CD4-positive, alpha-beta memory T cell (primary cell): ENCODE measurements at regions of chr15 and their contacts with region 1.

Region 1: GRCh38 chr15:85485956-85486567 is 105.7 kb downstream of the AKAP13 start:
- DNase-seq: peak; percentile 65 to 73 (median 70)
- H3K4me3 ChIP-seq: no peak overlapping the region
- H3K4me3 Mint-ChIP-seq: peak overlapping the region in 1 of 8 donors; percentile 12
- H3K27ac ChIP-seq: no peak overlapping the region
- H3K27ac Mint-ChIP-seq: peak overlapping the region in 4 of 7 donors; percentile 1 to 63 (median 22)
- H3K4me1 ChIP-seq: peaks cover 41% of the 10 kb centered on the region
- H3K4me1 Mint-ChIP-seq: peaks cover 49 to 79% (median 65%) of the 10 kb centered on the region in 4 donors
- H3K27me3 ChIP-seq: no peaks in the 10 kb centered on the region
- H3K27me3 Mint-ChIP-seq: no peaks in the 10 kb centered on the region

Region 2: DNA sequence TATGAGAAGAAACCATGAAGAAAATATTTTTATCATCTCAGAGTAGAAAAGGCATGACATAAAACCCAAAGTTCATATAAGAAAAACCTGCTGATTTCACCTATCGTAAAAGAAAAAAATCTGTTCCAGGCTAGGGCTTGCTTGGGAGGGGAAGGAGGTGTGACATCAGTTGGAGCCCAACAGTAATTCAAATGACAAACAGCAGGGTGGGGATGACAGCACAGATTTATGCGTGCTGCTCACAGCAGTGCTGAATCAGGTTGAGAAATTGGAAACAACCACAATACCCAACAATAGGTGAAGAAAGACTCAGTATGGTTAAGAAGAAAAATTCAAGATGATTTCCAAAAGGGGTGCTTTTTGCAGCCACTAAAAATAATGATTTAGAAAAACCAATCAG is 332.0 kb before region 1 on chr15:
- CTCF ChIA-PET with region 1: no interaction called
- POLR2A ChIA-PET with region 1: no interaction called
- intact Hi-C with region 1: no loop called
- DNase-seq: no peak
- H3K4me3 ChIP-seq: no peak overlapping the region
- H3K4me3 Mint-ChIP-seq: no peak overlapping the region
- H3K27ac ChIP-seq: no peak overlapping the region
- H3K27ac Mint-ChIP-seq: no peak overlapping the region
- H3K4me1 ChIP-seq: peaks cover 7% of the 10 kb centered on the region
- H3K4me1 Mint-ChIP-seq: peaks cover 6 to 16% (median 7%) of the 10 kb centered on the region in 4 donors
- H3K27me3 ChIP-seq: no peaks in the 10 kb centered on the region
- H3K27me3 Mint-ChIP-seq: peaks cover 3 to 8% of the 10 kb centered on the region in 2 donors

Region 3: DNA sequence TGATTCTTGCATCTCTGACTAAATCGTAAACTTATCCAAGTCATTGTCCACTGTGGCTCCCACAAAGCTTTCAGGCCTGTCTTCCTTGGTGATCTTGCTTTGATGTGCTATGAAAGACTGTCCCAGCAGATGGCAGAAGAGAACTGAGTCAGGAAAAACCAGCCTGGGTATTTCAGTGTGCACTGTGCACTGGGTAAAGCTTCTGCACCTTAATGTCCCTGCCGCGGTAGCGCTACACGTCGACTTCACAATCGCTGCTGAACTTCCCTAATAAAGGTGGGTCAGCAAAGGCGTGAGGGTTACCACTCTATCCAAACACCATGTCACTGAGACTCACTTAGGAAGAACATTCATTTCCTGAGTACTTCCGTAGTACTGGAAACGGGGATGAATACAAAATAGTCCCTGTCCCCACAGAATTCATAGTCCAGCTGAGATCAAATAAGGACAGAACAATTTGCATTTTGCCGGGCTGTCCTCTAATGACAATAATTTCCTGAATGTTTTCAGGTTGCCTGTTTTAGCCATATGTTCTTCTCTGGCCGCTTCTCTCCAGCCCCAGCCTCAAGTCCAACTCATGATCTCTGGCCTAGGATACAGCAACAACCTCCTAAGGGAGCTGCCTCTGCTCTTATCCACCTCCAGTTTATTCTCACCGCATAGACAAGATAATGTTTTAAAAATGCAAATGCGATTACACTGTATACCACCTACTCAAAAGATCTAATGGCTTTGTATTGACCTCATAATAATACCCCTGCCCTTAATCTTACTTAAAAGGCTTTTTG is 189.3 kb before region 1 on chr15:
- CTCF ChIA-PET with region 1: interaction called, 12 read pairs
- POLR2A ChIA-PET with region 1: no interaction called
- intact Hi-C with region 1: loop called (anchors 5 kb)
- DNase-seq: peak; percentile 67 to 75 (median 72)
- H3K4me3 ChIP-seq: peak overlapping the region in 1 of 2 donors; percentile 20
- H3K4me3 Mint-ChIP-seq: peak overlapping the region in 7 of 8 donors; percentile 1 to 70 (median 65)
- H3K27ac ChIP-seq: no peak overlapping the region
- H3K27ac Mint-ChIP-seq: peak overlapping the region in 4 of 7 donors; percentile 24 to 73 (median 27)
- H3K4me1 ChIP-seq: peaks cover 6% of the 10 kb centered on the region
- H3K4me1 Mint-ChIP-seq: peaks cover 8 to 15% (median 10%) of the 10 kb centered on the region in 4 donors
- H3K27me3 ChIP-seq: no peaks in the 10 kb centered on the region
- H3K27me3 Mint-ChIP-seq: peaks cover 0 to under 1% of the 10 kb centered on the region in 2 donors

Region 4: DNA sequence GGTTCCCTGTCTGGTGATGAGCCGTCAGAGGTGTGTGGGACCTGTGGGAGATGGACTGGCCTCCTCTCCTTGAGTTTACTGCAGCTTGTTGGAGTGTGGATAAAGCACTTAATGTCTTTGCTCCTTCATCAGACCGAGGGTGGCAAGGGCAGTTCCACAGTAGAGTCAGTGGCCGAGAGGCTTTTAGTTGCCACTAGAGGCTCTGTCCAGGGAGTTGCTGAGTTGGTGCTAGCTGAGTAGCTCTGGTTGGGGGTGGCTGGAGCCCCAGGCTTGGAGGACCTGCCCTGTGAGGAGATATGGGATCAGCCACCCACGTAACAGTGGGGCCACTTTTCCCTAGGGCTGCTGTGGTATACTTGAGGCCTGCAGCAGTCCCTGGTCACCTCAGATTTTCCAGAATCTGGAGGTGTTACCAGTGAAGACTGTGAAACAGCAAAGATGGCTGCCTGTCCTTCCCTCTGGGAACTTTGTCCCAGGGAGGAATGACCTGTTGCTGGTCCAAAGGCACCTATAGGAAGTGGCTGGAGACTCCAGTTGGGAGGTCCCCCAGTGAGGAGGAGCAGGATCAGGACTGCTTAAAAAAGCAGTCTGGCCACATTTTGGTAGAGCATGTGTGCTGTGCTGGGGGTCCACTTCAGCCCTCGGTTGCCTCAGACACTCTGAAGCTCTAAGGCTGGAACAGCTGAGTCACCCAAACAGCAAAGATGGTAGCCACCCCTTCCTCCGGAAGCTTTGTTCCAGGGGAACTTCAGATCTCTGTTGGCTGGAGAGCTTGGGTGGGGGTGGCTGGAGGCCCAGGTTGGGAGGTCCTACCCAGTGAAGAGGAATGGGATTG is 32.8 kb before region 1 on chr15:
- CTCF ChIA-PET with region 1: no interaction called
- POLR2A ChIA-PET with region 1: no interaction called
- intact Hi-C with region 1: no loop called
- DNase-seq: no peak
- H3K4me3 ChIP-seq: no peak overlapping the region
- H3K4me3 Mint-ChIP-seq: peak overlapping the region in 1 of 8 donors; percentile 15
- H3K27ac ChIP-seq: no peak overlapping the region
- H3K27ac Mint-ChIP-seq: peak overlapping the region in 2 of 7 donors; percentile 43 to 63
- H3K4me1 ChIP-seq: peaks cover 25% of the 10 kb centered on the region
- H3K4me1 Mint-ChIP-seq: peaks cover 52 to 85% (median 67%) of the 10 kb centered on the region in 4 donors
- H3K27me3 ChIP-seq: no peaks in the 10 kb centered on the region
- H3K27me3 Mint-ChIP-seq: no peaks in the 10 kb centered on the region

Region 5: GRCh38 chr15:85463276-85463892 is 22.7 kb before region 1 on chr15:
- CTCF ChIA-PET with region 1: no interaction called
- POLR2A ChIA-PET with region 1: no interaction called
- intact Hi-C with region 1: no loop called
- DNase-seq: no peak
- H3K4me3 ChIP-seq: no peak overlapping the region
- H3K4me3 Mint-ChIP-seq: peak overlapping the region in 1 of 8 donors; percentile 4
- H3K27ac ChIP-seq: no peak overlapping the region
- H3K27ac Mint-ChIP-seq: peak overlapping the region in 3 of 7 donors; percentile 15 to 25 (median 16)
- H3K4me1 ChIP-seq: peaks cover 7% of the 10 kb centered on the region
- H3K4me1 Mint-ChIP-seq: peaks cover 46 to 66% (median 53%) of the 10 kb centered on the region in 4 donors
- H3K27me3 ChIP-seq: no peaks in the 10 kb centered on the region
- H3K27me3 Mint-ChIP-seq: no peaks in the 10 kb centered on the region

Region 6: GRCh38 chr15:85475317-85475701 is 10.8 kb before region 1 on chr15:
- CTCF ChIA-PET with region 1: interaction called, 13 read pairs
- POLR2A ChIA-PET with region 1: interaction called, 3 read pairs
- intact Hi-C with region 1: no loop called
- DNase-seq: no peak
- H3K4me3 ChIP-seq: no peak overlapping the region
- H3K4me3 Mint-ChIP-seq: peak overlapping the region in 3 of 8 donors; percentile 0 to 22 (median 11)
- H3K27ac ChIP-seq: no peak overlapping the region
- H3K27ac Mint-ChIP-seq: peak overlapping the region in 3 of 7 donors; percentile 12 to 68 (median 32)
- H3K4me1 ChIP-seq: peaks cover 53% of the 10 kb centered on the region
- H3K4me1 Mint-ChIP-seq: peaks cover 63 to 94% (median 73%) of the 10 kb centered on the region in 4 donors
- H3K27me3 ChIP-seq: no peaks in the 10 kb centered on the region
- H3K27me3 Mint-ChIP-seq: no peaks in the 10 kb centered on the region

Region 7: DNA sequence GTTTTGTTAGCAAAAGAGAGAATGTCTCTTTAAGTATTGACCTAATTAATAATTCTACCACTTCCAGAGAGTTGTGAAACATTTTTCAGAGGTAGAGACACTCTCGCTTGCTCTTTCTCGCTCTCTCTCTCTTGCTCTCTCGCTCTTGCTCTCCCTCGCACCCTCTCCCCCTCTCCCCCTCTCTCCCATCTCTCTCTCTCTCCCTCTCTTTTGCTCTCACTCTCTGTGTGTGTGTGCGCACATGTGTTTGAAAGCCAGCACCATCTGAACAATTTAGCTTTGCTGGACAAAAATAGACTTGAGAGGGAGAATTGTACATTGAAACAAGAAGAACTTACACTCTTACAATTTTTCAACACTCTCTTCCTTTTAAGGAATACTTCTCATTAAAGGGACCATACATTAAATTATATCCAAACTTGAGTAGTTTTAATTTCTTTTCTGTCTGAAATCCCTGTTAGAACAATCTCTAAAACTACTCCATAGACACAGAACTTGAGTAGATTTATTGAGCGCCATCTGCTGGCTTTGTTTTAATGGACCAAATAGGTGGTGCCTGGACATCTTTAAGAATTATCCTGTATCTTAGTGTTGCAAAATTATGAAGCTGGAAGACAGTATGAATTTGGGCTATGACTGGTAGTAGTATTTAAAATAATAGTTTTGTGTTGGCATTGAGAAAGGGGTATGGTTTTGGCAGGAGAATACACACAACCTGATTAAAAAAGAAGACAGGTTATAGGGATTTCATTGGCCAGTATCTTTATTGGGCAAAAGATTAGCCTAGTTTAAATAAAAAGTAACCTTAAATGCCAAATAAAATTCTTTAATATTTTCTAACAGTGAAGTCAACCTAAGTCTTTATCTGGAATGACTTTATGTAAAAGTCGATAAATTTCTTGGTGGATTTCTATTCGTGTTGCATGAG is 19.0 kb after region 1 on chr15:
- CTCF ChIA-PET with region 1: interaction called, 36 read pairs
- POLR2A ChIA-PET with region 1: interaction called, 3 read pairs
- intact Hi-C with region 1: loop called (anchors 1 kb)
- DNase-seq: peak; percentile 37 to 55 (median 42)
- H3K4me3 ChIP-seq: no peak overlapping the region
- H3K4me3 Mint-ChIP-seq: no peak overlapping the region
- H3K27ac ChIP-seq: no peak overlapping the region
- H3K27ac Mint-ChIP-seq: peak overlapping the region in 4 of 7 donors; percentile 9 to 75 (median 34)
- H3K4me1 ChIP-seq: peaks cover 48% of the 10 kb centered on the region
- H3K4me1 Mint-ChIP-seq: peaks cover 56 to 65% (median 60%) of the 10 kb centered on the region in 4 donors
- H3K27me3 ChIP-seq: no peaks in the 10 kb centered on the region
- H3K27me3 Mint-ChIP-seq: no peaks in the 10 kb centered on the region

Region 8: GRCh38 chr15:85702321-85703101 is 216.4 kb after region 1 on chr15:
- CTCF ChIA-PET with region 1: interaction called, 4 read pairs
- POLR2A ChIA-PET with region 1: no interaction called
- intact Hi-C with region 1: loop called (anchors 5 kb)
- DNase-seq: peak; percentile 39 to 76 (median 56)
- H3K4me3 ChIP-seq: peak overlapping the region; percentile 21 to 54
- H3K4me3 Mint-ChIP-seq: peak overlapping the region; percentile 68 to 86 (median 76)
- H3K27ac ChIP-seq: peak overlapping the region; percentile 82
- H3K27ac Mint-ChIP-seq: peak overlapping the region; percentile 94 to 98 (median 97)
- H3K4me1 ChIP-seq: peaks cover 87% of the 10 kb centered on the region
- H3K4me1 Mint-ChIP-seq: peaks cover 60 to 87% (median 71%) of the 10 kb centered on the region in 4 donors
- H3K27me3 ChIP-seq: no peaks in the 10 kb centered on the region
- H3K27me3 Mint-ChIP-seq: no peaks in the 10 kb centered on the region

Region 9: DNA sequence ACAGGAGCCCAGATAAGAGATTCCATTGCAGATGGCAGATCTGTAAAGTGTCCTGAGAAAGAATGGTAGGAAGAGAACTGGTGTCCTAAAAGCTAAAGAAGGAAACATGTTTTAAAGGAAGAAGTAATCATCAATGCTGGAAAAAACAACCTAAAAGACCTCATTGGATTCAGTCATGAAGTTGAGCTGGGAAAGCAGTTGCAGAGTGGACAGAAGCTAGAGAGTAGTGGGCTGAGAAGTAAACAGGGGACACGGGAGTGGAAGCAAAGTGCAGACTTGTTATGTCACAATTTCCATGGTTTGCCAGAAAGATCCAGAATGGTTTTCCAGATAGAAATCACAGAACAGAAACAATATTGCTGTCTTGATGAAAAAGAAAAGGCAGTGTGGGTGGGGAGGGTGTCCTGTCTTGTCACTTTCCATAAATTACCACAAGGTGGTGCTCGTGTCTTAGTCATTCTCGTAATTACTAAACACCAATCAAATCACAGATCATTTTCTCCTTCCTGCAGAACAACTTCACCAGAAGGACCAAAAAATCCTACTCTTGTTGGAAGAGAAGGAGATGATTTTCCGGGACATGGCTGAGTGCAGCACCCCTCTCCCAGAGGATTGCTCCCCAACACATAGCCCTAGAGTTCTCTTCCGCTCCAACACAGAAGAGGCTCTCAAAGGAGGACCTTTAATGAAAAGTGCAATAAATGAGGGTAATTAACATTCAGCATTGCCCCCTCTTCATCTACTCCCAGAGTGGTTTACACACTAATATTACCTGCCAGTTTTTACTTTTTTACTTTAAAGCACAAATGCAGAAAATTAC is 244.1 kb after region 1 on chr15:
- CTCF ChIA-PET with region 1: no interaction called
- POLR2A ChIA-PET with region 1: no interaction called
- intact Hi-C with region 1: loop called (anchors 2 kb)
- DNase-seq: peak; percentile 61 to 68 (median 64)
- H3K4me3 ChIP-seq: no peak overlapping the region
- H3K4me3 Mint-ChIP-seq: no peak overlapping the region
- H3K27ac ChIP-seq: no peak overlapping the region
- H3K27ac Mint-ChIP-seq: peak overlapping the region; percentile 43 to 92 (median 83)
- H3K4me1 ChIP-seq: peaks cover 9% of the 10 kb centered on the region
- H3K4me1 Mint-ChIP-seq: peaks cover 9 to 16% (median 14%) of the 10 kb centered on the region in 4 donors
- H3K27me3 ChIP-seq: no peaks in the 10 kb centered on the region
- H3K27me3 Mint-ChIP-seq: no peaks in the 10 kb centered on the region